BJ (cell line): ENCODE measurements at regions of chr1 and their contacts with region 1.

Region 1: GRCh38 chr1:231211005-231211857 is 29.8 kb upstream of the GNPAT start:
- DNase-seq: peak; percentile 4
- H3K4me3 ChIP-seq: peak overlapping the region; percentile 39
- H3K27me3 ChIP-seq: peaks cover 14% of the 10 kb centered on the region
- CTCF ChIP-seq: peak; percentile 90

Region 2: DNA sequence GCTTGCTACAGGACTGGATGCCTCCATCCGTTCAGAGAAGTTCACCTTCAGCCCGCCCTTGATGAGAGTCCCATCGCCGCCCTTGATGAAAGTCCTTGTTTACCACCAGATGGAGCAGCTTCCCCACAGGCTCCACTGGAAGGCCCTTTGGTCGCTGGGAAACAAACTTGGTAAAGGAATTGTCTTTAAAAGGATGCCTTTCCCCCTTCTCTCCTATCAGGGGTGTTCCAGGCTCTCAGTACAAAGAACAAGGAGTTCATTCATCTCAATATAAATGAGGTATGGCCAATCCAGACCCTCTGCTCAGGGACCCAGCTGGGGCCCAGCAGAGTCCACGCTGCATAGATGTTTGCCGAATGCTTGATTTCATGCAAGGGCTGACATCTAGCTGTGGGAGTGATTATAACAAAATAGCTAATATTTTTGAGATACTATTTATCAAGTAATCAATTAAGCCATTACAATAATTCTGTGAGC is 413.3 kb before region 1 on chr1:
- CTCF ChIA-PET with region 1: interaction called, 49 read pairs
- POLR2A ChIA-PET with region 1: no interaction called
- DNase-seq: no peak
- H3K4me3 ChIP-seq: no peak overlapping the region
- H3K27me3 ChIP-seq: no peaks in the 10 kb centered on the region
- CTCF ChIP-seq: peak; percentile 92

Region 3: GRCh38 chr1:230922620-230923019 is 288.6 kb before region 1 on chr1:
- CTCF ChIA-PET with region 1: interaction called, 28 read pairs
- POLR2A ChIA-PET with region 1: no interaction called
- DNase-seq: no peak
- H3K4me3 ChIP-seq: no peak overlapping the region
- H3K27me3 ChIP-seq: no peaks in the 10 kb centered on the region
- CTCF ChIP-seq: peak; percentile 18; the same call in 1 of the 2 replicates

Region 4: DNA sequence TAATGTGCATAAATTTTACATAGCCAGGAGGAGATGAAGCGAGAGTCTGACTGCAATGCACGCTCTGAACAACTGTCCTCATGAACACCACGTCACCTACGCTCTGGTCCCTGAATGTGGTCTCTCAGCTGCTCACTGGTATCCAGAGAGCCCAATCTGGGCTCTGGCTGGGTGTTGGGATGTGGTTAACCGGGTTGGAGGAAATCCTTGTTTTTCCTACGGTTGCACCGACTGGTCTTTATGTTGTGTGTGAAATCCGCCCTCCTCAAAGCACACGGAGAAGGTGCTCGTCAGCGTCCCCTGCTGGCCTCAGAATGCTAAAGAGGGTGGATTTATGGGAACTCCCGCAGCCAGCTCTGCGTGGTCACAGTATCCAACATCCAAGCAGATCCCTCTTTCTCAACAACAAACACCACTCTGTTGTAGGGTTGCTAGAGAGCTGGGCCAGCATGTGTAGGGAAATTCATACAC is 119.4 kb before region 1 on chr1:
- CTCF ChIA-PET with region 1: interaction called, 13 read pairs
- POLR2A ChIA-PET with region 1: no interaction called
- DNase-seq: no peak
- H3K4me3 ChIP-seq: no peak overlapping the region
- H3K27me3 ChIP-seq: peaks cover 2% of the 10 kb centered on the region
- CTCF ChIP-seq: peak; percentile 59

Region 5: DNA sequence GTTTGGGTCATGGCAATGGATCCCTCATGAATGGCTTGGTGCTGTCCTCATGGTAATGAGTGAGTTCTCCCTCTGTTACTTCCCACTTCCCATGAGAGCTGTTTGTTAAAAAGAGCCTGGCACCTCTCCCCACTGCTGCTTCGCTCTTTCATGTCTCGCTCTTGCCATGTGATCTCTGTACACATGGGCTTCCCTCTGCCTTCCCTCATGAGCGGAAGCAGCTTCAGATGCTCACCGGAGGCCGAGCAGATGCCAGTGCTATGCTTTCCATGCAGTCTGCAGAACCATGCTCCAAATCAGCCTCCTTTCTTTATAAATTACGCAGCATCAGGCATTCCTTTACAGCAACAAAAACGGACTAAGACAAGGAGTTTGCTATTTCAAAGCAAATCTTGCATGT is 14.9 kb after region 1 on chr1:
- CTCF ChIA-PET with region 1: interaction called, 14 read pairs
- POLR2A ChIA-PET with region 1: no interaction called
- DNase-seq: no peak
- H3K4me3 ChIP-seq: no peak overlapping the region
- H3K27me3 ChIP-seq: no peaks in the 10 kb centered on the region
- CTCF ChIP-seq: no peak